Left cardiac atrium (tissue), 4 donors: ENCODE measurements at regions of chr4 and their contacts with region 1.

Region 1: GRCh38 chr4:52712172-52712990 is 38.8 kb downstream of the ERVMER34-1 start:
- DNase-seq: peak; percentile 99
- ATAC-seq: peak; percentile 99

Region 2: GRCh38 chr4:52588097-52588782 is 124.1 kb before region 1 on chr4:
- intact Hi-C with region 1: no loop called
- DNase-seq: peak; percentile 44
- ATAC-seq: peak; percentile 43 to 74

Region 3: DNA sequence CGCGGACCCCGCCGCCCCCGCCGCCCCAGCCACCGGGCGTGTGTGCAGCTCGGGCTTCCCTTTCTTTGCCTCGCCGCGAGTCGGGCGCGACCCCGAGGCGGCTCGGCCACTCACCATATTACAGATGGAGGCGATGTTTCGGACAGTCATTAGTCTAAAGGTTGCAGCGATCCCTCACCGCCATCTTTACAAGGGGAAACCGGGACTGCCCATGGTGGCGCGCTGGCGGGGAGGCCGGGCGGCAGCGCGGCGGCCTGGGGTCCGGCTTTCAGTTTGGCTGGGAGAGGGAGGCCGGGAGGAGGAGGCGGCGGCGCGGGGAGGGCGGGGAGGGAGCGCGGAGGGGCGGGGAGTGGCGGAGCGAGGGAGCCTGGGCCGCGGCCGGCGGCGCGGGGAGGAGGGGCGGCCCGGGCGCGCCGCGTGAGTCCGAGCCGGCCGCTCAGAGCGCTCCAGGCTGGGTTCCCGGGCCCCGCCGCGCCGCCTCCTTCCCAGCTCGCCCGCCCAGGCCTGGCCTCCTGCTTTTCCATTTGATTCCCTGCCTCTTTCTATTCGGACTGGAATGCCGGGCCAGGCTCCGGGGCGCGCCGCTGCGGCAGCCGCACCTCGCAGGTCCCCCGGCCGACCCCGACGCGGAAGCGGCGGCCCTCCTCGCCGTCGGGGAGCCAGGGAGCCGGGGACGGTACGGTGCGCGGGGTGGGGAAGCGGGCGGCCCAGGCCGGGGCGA is 53.2 kb before region 1 on chr4 and contains the start of gene USP46:
- intact Hi-C with region 1: loop called in 1 of 2 experiments (anchors 10 kb)
- DNase-seq: peak; percentile 84
- ATAC-seq: peak; percentile 96 to 97
- total RNA-seq, gene USP46: 40.7 to 48.0 TPM

Region 4: DNA sequence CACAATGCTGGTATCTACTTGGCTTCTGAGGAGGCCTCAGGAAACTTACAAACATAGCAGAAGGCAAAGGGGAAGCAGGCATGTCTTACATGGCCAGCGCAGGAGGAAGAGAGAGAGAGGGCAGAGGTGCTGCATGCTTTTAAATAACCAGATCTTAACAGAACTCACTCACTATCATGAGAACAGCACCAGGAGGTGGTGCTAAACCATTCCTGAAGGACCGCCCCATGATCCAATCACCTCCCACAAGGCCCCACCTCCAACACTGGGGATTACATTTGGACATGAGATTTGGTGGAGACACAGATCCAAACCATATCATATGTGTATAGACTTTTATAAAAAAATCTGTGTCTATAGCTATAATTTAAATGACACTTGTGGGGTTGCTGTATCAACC is 87.4 kb after region 1 on chr4:
- intact Hi-C with region 1: no loop called
- DNase-seq: no peak
- ATAC-seq: no peak

Region 5: DNA sequence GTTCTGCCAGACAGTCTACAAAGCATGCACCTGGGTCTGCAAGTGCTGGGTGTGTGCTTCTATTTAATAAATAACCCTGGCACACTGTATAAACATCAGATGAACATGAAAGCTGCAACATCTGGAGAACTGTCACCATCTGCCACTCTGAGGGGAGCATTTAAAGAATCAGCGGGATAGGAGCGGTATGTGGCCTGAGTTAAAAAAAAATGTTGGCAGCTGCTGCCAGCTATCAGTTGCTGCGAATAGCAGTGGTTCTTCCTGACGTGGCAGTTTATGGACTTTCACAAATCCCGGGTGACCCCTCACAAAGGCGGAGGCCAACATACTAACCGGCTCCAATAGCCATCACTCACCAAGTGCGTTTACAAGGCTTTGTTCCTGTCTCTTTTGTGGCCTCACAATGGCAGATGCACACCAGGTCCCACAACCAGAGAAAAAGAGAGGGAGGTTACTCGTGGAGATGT is 244.9 kb after region 1 on chr4:
- intact Hi-C with region 1: loop called in 1 of 2 experiments (anchors 10 kb)
- DNase-seq: no peak
- ATAC-seq: peak; percentile 66 to 73